ENCODE measurements at regions of chr5 and their contacts with region 1.

Region 1: GRCh38 chr5:134794082-134794481 is 35.5 kb downstream of the DDX46 start:
- DNase-seq: no peak
- ATAC-seq: no peak
- H3K4me3 ChIP-seq: no peak overlapping the region
- H3K27ac ChIP-seq: no peak overlapping the region
- H3K4me1 ChIP-seq: no peaks in the 10 kb centered on the region
- H3K27me3 ChIP-seq: no peaks in the 10 kb centered on the region
- CTCF ChIP-seq: no peak

Region 2: DNA sequence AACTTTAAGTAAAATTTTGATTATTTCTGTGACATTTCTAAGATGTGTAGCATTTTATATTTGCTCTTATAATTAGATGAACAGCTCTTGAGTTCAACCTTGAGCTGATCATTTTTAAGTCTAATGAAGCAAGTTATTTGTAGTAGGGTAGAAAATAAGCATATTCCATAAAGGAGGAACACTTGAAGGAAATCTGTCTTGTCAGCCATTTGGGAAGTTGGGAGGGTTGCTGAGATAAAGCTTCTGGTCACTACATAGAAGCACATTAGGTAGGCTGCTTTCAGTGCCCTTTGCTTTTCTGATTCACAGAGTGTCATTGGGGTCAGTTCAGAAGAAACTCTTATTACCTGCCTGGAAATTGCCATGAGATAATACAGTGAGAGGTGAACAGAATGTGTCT is 101.4 kb before region 1 on chr5:
- intact Hi-C with region 1: loop called (anchors 10 kb)
- DNase-seq: no peak
- ATAC-seq: no peak
- H3K4me3 ChIP-seq: no peak overlapping the region
- H3K27ac ChIP-seq: no peak overlapping the region
- H3K4me1 ChIP-seq: no peaks in the 10 kb centered on the region
- H3K27me3 ChIP-seq: no peaks in the 10 kb centered on the region
- CTCF ChIP-seq: no peak

Region 3: DNA sequence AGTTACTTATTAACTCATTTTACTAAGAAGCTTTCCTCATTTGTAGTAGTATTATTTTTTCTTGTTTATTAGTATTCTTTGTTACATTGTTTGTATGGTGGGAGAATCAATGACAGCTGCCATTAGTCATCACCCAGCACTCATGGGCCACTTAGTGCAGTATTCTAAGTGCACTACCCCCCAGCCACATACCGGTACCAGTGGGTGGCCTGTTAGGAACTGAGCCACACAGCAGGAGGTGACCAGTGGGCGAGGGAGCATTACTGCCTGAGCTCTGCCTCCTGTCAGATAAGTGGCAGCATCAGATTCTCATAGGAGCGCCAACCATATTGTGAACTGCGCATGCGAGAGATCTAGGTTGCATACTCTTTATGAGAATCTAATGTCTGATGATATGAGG is 80.0 kb before region 1 on chr5:
- intact Hi-C with region 1: no loop called
- DNase-seq: no peak
- ATAC-seq: no peak
- H3K4me3 ChIP-seq: no peak overlapping the region
- H3K27ac ChIP-seq: no peak overlapping the region
- H3K4me1 ChIP-seq: no peaks in the 10 kb centered on the region
- H3K27me3 ChIP-seq: no peaks in the 10 kb centered on the region
- CTCF ChIP-seq: no peak

Measured in upper lobe of right lung (tissue), 1 donor.